Breast epithelium (tissue), 4 donors: ENCODE measurements at regions of chr2 and their contacts with region 1.

Region 1: DNA sequence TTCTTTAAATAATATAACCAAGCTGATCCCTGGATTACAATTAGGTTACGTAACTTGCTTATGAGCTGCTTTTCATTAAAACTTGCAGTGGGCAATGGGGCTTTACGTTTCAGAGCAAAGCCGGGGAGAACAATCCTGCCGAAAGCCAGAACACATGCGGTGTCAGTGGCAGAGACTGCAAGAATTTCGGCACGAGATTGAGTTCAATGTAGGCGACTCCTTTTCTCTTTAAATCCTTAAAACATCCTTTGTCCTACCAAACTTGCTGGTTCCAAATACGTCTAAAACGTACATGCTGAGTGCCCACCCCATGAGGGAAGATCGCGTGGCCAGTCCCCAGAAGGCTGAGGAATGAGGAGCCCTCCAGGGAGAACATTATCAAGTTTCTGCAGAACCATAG is 36.8 kb upstream of the NCOA1 start:
- DNase-seq: no peak
- H3K4me3 ChIP-seq: peak overlapping the region; percentile 11 to 61 (median 39)
- H3K27ac ChIP-seq: peak overlapping the region; percentile 22 to 52
- H3K4me1 ChIP-seq: peaks cover 0 to 4% of the 10 kb centered on the region in 2 donors
- H3K27me3 ChIP-seq: no peaks in the 10 kb centered on the region
- CTCF ChIP-seq: no peak
- POLR2A ChIP-seq: no peak

Region 2: GRCh38 chr2:24471662-24472061 is 17.4 kb after region 1 on chr2:
- intact Hi-C with region 1: loop called (anchors 2 kb)
- DNase-seq: no peak
- H3K4me3 ChIP-seq: no peak overlapping the region
- H3K27ac ChIP-seq: no peak overlapping the region
- H3K4me1 ChIP-seq: no peaks in the 10 kb centered on the region
- H3K27me3 ChIP-seq: no peaks in the 10 kb centered on the region
- CTCF ChIP-seq: no peak
- POLR2A ChIP-seq: no peak

Region 3: DNA sequence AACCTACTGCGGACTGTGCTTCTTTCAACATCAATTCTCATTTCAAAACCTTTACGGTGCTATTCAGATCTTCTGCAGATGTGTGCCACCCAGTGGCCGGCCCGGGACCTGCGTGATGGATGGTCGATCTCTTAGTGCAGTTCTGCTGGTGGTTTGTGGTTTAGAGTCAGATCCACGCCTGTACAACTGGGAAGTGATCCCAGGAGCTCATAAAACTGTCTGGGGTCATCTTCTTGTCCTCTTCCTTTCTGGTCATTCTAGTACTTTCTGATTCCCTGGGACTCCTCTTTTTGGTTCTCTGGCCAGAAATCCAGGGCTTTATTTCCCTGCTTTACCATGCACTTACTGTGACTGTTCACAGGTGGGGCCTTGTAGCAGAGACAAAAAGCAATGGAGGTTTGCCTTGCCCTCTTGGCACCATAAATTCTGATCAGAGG is 1875.8 kb after region 1 on chr2:
- intact Hi-C with region 1: no loop called
- DNase-seq: peak; percentile 88 to 91
- H3K4me3 ChIP-seq: no peak overlapping the region
- H3K27ac ChIP-seq: no peak overlapping the region
- H3K4me1 ChIP-seq: no peaks in the 10 kb centered on the region
- H3K27me3 ChIP-seq: no peaks in the 10 kb centered on the region
- CTCF ChIP-seq: peak; percentile 77 to 94 (median 84)
- POLR2A ChIP-seq: no peak